RWPE1 (cell line): ENCODE measurements at regions of chrX and their contacts with region 1.

Region 1: GRCh38 chrX:88735835-88736234 is 11.2 kb upstream of the CPXCR1 start:
- DNase-seq: peak; percentile 47
- H3K27ac ChIP-seq: no peak overlapping the region
- CTCF ChIP-seq: no peak

Region 2: DNA sequence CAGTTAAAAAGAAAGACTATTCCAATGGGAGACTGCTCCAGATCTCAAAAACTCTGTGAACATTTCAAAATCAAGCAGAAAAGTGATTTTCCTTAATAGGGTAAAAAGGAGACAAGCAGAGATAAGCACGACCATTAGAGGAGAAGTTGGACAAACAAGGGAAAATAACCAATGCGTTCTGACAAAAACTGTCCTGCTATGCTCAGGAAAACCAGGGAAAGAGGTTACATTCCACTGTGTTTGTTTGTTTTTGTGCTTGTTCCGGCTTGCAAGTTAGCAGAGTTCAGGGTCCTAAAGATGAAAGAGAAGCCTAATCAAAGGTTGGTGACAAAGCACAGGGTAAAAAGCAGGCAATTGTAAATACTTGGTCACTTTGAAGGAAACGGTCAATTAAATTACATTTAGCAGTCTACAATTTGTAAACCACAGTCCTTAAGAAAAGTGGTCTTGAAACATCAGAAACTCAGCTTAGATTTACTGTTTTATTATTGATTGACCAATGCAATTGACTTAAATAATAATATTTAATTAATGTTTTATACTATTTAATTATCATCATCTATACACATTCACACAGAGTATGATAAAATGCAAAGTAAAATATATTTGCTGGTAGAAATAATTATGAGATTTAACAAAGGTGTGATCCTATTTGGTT is 175.0 kb before region 1 on chrX:
- CTCF ChIA-PET with region 1: no interaction called
- POLR2A ChIA-PET with region 1: interaction called, 11 read pairs
- DNase-seq: no peak
- H3K27ac ChIP-seq: no peak overlapping the region
- CTCF ChIP-seq: no peak